CD4-positive, alpha-beta memory T cell (primary cell): ENCODE measurements at regions of chr10 and their contacts with region 1.

Region 1: GRCh38 chr10:28334296-28334695 is 31.4 kb upstream of the MPP7 start:
- DNase-seq: peak; percentile 87 to 95 (median 93)
- H3K4me3 ChIP-seq: peak overlapping the region; percentile 36 to 94
- H3K4me3 Mint-ChIP-seq: peak overlapping the region; percentile 91 to 98 (median 96)
- H3K27ac ChIP-seq: peak overlapping the region; percentile 97
- H3K27ac Mint-ChIP-seq: peak overlapping the region; percentile 99 to 100 (median 100)
- H3K4me1 ChIP-seq: peaks cover 62% of the 10 kb centered on the region
- H3K4me1 Mint-ChIP-seq: peaks cover 32 to 70% (median 49%) of the 10 kb centered on the region in 4 donors
- H3K27me3 ChIP-seq: no peaks in the 10 kb centered on the region
- H3K27me3 Mint-ChIP-seq: no peaks in the 10 kb centered on the region

Region 2: GRCh38 chr10:26448706-26449435 is 1885.4 kb before region 1 on chr10:
- CTCF ChIA-PET with region 1: no interaction called
- POLR2A ChIA-PET with region 1: no interaction called
- intact Hi-C with region 1: loop called (anchors 10 kb)
- DNase-seq: peak; percentile 87 to 91 (median 89)
- H3K4me3 ChIP-seq: peak overlapping the region; percentile 31 to 37
- H3K4me3 Mint-ChIP-seq: peak overlapping the region; percentile 76 to 89 (median 84)
- H3K27ac ChIP-seq: peak overlapping the region; percentile 68
- H3K27ac Mint-ChIP-seq: peak overlapping the region; percentile 92 to 99 (median 98)
- H3K4me1 ChIP-seq: peaks cover 95% of the 10 kb centered on the region
- H3K4me1 Mint-ChIP-seq: peaks cover 77 to 93% (median 85%) of the 10 kb centered on the region in 4 donors
- H3K27me3 ChIP-seq: no peaks in the 10 kb centered on the region
- H3K27me3 Mint-ChIP-seq: no peaks in the 10 kb centered on the region

Region 3: GRCh38 chr10:27155066-27155754 is 1179.1 kb before region 1 on chr10 and contains the start of gene MASTL:
- CTCF ChIA-PET with region 1: no interaction called
- POLR2A ChIA-PET with region 1: interaction called, 11 read pairs
- intact Hi-C with region 1: loop called (anchors 10 kb)
- DNase-seq: peak; percentile 94 to 97 (median 96)
- H3K4me3 ChIP-seq: peak within 1 kb of the TSS; percentile 82 to 100
- H3K4me3 Mint-ChIP-seq: peak within 1 kb of the TSS; percentile 95 to 100 (median 98)
- H3K27ac ChIP-seq: peak within 1 kb of the TSS; percentile 100
- H3K27ac Mint-ChIP-seq: peak within 1 kb of the TSS; percentile 100
- H3K4me1 ChIP-seq: peaks cover 40% of the 10 kb centered on the region
- H3K4me1 Mint-ChIP-seq: peaks cover 25 to 67% (median 45%) of the 10 kb centered on the region in 4 donors
- H3K27me3 ChIP-seq: no peaks in the 10 kb centered on the region
- H3K27me3 Mint-ChIP-seq: no peaks in the 10 kb centered on the region
- total RNA-seq, gene MASTL: 7.0 to 7.9 TPM

Region 4: DNA sequence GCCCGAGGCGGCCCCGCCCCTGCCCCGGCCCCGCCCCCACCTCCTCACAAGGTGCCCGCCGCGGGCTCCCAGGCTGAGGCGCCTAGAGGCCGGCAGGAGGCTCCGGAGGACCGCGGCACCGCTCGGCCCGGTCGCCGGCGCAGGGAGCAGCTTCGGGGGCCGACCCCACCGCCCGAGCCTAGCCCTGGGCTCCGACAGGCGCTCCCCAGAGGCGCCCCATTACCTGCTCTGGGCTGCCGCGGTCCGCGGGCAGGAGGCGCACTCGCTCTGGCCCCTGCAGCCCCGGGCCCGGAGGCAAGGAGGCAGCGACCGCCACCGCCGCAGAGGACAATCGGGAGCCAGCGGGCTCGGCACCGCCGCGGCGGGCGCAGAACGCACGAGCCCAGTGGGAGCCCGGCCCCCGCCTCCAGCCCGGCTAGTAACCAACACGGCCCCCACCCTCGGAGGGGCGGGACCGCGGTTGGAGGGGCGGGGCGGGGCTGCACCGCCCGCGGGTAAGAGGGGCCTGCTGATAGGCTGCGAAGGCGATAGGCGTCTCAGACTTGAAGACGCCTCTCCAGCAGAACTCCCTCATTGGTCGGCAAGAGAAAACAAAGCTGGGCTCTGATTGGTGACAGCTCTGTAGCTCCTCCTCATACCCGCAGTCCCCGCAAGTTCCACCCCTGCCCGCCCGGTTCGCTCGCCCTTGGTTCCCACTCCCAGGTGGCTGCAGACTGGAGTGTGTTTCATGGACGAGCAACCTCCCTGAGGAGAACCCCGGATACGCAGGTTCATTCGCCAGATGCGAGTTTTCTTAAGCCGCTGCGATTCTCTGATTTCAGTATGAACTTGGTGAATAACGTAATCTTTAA is 31.4 kb before region 1 on chr10 and contains the start of gene MPP7:
- CTCF ChIA-PET with region 1: interaction called, 191 read pairs
- POLR2A ChIA-PET with region 1: interaction called, 338 read pairs
- intact Hi-C with region 1: loop called (anchors 1 kb)
- DNase-seq: peak; percentile 96 to 98 (median 97)
- H3K4me3 ChIP-seq: peak within 1 kb of the TSS; percentile 82 to 93
- H3K4me3 Mint-ChIP-seq: peak within 1 kb of the TSS; percentile 88 to 97 (median 94)
- H3K27ac ChIP-seq: peak within 1 kb of the TSS; percentile 51
- H3K27ac Mint-ChIP-seq: peak within 1 kb of the TSS; percentile 87 to 95 (median 93)
- H3K4me1 ChIP-seq: peaks cover 48% of the 10 kb centered on the region
- H3K4me1 Mint-ChIP-seq: peaks cover 44 to 76% (median 57%) of the 10 kb centered on the region in 4 donors
- H3K27me3 ChIP-seq: no peaks in the 10 kb centered on the region
- H3K27me3 Mint-ChIP-seq: no peaks in the 10 kb centered on the region
- total RNA-seq, gene MPP7: 24.9 to 28.1 TPM

Region 5: DNA sequence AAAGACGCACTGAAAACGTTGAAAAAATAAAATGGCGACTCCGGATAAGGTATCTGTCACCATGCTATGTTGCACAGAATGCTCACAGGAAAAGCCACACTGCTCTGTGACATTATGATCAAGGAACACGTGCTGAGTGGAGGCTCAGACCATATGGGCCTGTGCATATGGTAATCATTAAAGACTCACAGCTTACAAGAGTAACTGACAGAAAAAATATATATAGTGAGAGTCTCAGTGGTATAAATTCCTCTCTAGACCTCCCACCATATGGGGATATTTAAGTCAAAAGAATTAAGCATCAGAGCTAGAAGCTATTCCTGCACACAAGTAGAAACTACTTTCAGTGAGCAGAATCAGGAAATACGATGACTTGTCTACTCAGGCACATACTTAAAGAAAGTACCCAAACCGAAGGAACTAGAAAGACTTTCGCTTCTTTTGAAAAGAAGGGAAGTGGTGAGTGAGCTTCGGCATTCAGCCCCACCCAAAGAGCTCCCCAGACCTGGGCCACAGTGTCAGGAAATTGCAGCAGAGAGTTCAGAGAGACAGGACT is 33.7 kb after region 1 on chr10:
- CTCF ChIA-PET with region 1: interaction called, 43 read pairs
- POLR2A ChIA-PET with region 1: interaction called, 420 read pairs
- intact Hi-C with region 1: loop called (anchors 1 kb)
- DNase-seq: peak; percentile 74 to 86 (median 80)
- H3K4me3 ChIP-seq: no peak overlapping the region
- H3K4me3 Mint-ChIP-seq: peak overlapping the region; percentile 41 to 87 (median 80)
- H3K27ac ChIP-seq: peak overlapping the region; percentile 65
- H3K27ac Mint-ChIP-seq: peak overlapping the region; percentile 85 to 98 (median 97)
- H3K4me1 ChIP-seq: peaks cover 58% of the 10 kb centered on the region
- H3K4me1 Mint-ChIP-seq: peaks cover 33 to 61% (median 49%) of the 10 kb centered on the region in 4 donors
- H3K27me3 ChIP-seq: no peaks in the 10 kb centered on the region
- H3K27me3 Mint-ChIP-seq: no peaks in the 10 kb centered on the region

Region 6: DNA sequence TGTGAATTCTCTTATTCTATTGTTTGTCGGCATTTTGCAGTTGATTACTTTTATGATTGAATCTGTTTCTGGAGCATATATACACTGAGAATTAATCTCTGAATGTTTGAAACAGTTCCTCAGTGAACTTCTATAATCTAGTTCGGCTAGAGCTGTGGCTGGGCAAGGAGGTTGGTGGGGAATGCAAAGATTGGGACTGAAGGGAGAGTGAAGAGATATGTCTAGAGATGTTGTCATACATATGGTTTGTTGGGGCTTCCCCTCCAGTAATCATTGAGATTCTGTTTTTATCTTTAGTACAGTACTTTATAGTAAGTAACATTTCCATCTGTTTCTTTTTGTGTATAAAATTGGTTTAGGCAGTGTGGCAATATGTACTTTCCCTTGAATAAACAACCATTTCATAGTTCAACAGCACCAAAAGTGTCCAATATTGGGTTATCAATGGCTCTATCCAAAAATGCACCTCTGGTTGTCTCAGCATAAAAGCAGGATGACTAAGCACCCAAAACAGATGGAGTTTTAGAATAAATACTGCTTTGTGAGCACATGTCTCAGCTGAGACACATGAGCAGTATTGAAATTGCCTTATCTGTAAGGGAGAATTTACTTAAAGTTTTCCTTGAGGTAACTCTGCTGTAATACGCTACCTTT is 235.3 kb after region 1 on chr10:
- CTCF ChIA-PET with region 1: no interaction called
- POLR2A ChIA-PET with region 1: no interaction called
- intact Hi-C with region 1: no loop called
- DNase-seq: no peak
- H3K4me3 ChIP-seq: no peak overlapping the region
- H3K4me3 Mint-ChIP-seq: peak overlapping the region in 5 of 8 donors; percentile 10 to 55 (median 27)
- H3K27ac ChIP-seq: no peak overlapping the region
- H3K27ac Mint-ChIP-seq: peak overlapping the region in 5 of 7 donors; percentile 14 to 82 (median 34)
- H3K4me1 ChIP-seq: peaks cover 95% of the 10 kb centered on the region
- H3K4me1 Mint-ChIP-seq: peaks cover 59 to 97% (median 77%) of the 10 kb centered on the region in 4 donors
- H3K27me3 ChIP-seq: no peaks in the 10 kb centered on the region
- H3K27me3 Mint-ChIP-seq: no peaks in the 10 kb centered on the region

Region 7: DNA sequence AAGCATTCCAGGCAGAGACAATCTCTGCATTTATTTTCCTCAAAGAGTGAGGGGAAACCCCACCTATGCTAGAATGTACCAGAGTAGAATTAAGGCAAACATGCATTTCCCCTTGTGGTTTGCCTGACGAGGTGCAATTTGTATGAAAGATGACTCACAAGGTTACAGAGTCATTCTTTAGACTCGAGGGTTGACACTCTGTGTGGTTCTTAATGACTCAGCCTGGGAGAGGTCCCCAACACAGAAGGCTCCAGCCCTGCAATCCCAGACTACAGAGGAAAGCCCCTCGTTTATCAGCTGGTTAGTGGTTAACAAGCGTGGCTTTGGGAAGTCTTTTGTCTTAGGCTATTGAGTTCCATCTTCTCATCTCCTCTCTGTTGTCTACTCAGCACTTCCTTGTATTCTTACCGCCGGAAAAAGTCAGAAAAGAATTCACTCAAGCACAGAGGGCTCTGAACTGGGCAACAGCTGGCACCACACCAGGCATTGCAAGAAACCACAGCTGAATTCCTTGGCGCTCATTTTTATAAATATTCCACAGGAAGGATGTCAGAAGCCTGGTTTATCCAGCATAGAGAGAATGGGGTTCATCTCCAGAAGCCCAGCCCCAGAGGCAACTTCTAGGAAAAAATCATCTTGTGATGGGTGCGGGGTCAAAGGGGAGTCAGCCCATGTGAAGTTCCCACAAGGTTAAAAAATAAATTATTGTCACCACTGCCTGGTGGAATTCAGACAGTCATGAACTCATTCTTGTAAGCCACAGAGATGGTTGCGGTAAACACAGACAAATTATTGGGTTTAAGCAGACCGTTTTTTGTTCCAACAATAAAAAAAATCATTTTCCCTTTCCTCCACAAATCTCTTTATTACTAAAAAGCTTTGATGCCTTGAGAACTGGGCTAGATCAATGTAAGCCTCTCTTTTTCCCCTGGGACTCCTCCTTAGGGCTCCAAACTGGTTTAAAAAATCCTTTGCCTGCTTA is 1325.0 kb after region 1 on chr10:
- CTCF ChIA-PET with region 1: no interaction called
- POLR2A ChIA-PET with region 1: no interaction called
- intact Hi-C with region 1: loop called (anchors 5 kb)
- DNase-seq: peak; percentile 76 to 95 (median 78)
- H3K4me3 ChIP-seq: peak overlapping the region in 1 of 2 donors; percentile 5
- H3K4me3 Mint-ChIP-seq: peak overlapping the region; percentile 60 to 80 (median 69)
- H3K27ac ChIP-seq: peak overlapping the region; percentile 66
- H3K27ac Mint-ChIP-seq: peak overlapping the region; percentile 88 to 96 (median 94)
- H3K4me1 ChIP-seq: peaks cover 33% of the 10 kb centered on the region
- H3K4me1 Mint-ChIP-seq: peaks cover 28 to 53% (median 34%) of the 10 kb centered on the region in 4 donors
- H3K27me3 ChIP-seq: no peaks in the 10 kb centered on the region
- H3K27me3 Mint-ChIP-seq: no peaks in the 10 kb centered on the region